Stomach (tissue), 19 donors: ENCODE measurements at regions of chr9 and their contacts with region 1.

Region 1: GRCh38 chr9:10148796-10149195 is 464.0 kb downstream of the PTPRD start:
- DNase-seq: no peak
- H3K4me3 ChIP-seq: no peak overlapping the region
- H3K27ac ChIP-seq: no peak overlapping the region
- H3K4me1 ChIP-seq: peaks cover 0 to 6% (median 2%) of the 10 kb centered on the region in 4 donors
- H3K27me3 ChIP-seq: no peaks in the 10 kb centered on the region
- CTCF ChIP-seq: no peak
- EP300 ChIP-seq: no peak
- POLR2A ChIP-seq: no peak

Region 2: GRCh38 chr9:9112001-9112720 is 1036.6 kb before region 1 on chr9:
- intact Hi-C with region 1: no loop called
- DNase-seq: no peak
- H3K4me3 ChIP-seq: no peak overlapping the region
- H3K27ac ChIP-seq: no peak overlapping the region
- H3K4me1 ChIP-seq: no peaks in the 10 kb centered on the region
- H3K27me3 ChIP-seq: no peaks in the 10 kb centered on the region
- CTCF ChIP-seq: no peak
- EP300 ChIP-seq: no peak
- POLR2A ChIP-seq: no peak

Region 3: GRCh38 chr9:10212702-10213101 is 63.9 kb after region 1 on chr9:
- intact Hi-C with region 1: loop called (anchors 10 kb)
- DNase-seq: no peak
- H3K4me3 ChIP-seq: no peak overlapping the region
- H3K27ac ChIP-seq: no peak overlapping the region
- H3K4me1 ChIP-seq: no peaks in the 10 kb centered on the region
- H3K27me3 ChIP-seq: no peaks in the 10 kb centered on the region
- CTCF ChIP-seq: no peak
- EP300 ChIP-seq: no peak
- POLR2A ChIP-seq: no peak

Region 4: DNA sequence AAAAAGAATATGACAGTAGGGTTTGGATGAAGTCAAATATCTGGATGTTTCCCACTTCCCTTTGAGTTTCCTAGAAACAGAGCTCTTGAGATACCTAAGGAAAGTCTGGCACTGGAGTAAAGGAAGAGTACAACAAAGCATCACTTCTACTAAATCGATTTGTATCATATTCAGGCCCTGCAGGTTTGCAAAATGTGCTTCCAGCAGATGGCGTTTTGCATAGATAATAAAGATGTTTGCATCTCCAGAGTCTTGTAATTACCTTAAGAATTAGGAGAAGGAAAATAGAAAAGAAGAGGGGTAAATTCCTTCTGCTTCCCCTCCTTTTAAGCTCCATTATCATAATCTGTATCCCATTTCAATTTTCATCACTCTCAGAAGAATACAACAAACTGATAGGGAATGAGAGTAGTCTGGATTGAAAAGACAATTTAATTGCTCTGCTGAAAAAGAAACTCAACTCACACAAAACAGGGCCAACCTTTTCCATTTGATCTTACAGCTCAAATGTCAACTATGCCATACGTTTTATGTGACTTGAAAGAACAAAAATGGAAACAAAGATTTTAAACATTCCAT is 83.6 kb after region 1 on chr9:
- intact Hi-C with region 1: no loop called
- DNase-seq: peak in 1 of 2 donors; percentile 25
- H3K4me3 ChIP-seq: no peak overlapping the region
- H3K27ac ChIP-seq: no peak overlapping the region
- H3K4me1 ChIP-seq: no peaks in the 10 kb centered on the region
- H3K27me3 ChIP-seq: no peaks in the 10 kb centered on the region
- CTCF ChIP-seq: peak in 1 of 7 experiments; percentile 20
- EP300 ChIP-seq: no peak
- POLR2A ChIP-seq: no peak

Region 5: GRCh38 chr9:10523164-10523563 is 374.4 kb after region 1 on chr9:
- intact Hi-C with region 1: no loop called
- DNase-seq: no peak
- H3K4me3 ChIP-seq: no peak overlapping the region
- H3K27ac ChIP-seq: no peak overlapping the region
- H3K4me1 ChIP-seq: peaks cover 0 to 13% (median 0%) of the 10 kb centered on the region in 4 donors
- H3K27me3 ChIP-seq: no peaks in the 10 kb centered on the region
- CTCF ChIP-seq: no peak
- EP300 ChIP-seq: no peak
- POLR2A ChIP-seq: no peak